HEK293 (cell line): ENCODE measurements at regions of chr6 and their contacts with region 1.

Region 1: GRCh38 chr6:19024737-19025136 is 637.6 kb downstream of the RNF144B start:
- H3K4me3 ChIP-seq: no peak overlapping the region
- H3K27ac ChIP-seq: no peak overlapping the region
- H3K4me1 ChIP-seq: no peaks in the 10 kb centered on the region
- CTCF ChIP-seq: no peak

Region 2: DNA sequence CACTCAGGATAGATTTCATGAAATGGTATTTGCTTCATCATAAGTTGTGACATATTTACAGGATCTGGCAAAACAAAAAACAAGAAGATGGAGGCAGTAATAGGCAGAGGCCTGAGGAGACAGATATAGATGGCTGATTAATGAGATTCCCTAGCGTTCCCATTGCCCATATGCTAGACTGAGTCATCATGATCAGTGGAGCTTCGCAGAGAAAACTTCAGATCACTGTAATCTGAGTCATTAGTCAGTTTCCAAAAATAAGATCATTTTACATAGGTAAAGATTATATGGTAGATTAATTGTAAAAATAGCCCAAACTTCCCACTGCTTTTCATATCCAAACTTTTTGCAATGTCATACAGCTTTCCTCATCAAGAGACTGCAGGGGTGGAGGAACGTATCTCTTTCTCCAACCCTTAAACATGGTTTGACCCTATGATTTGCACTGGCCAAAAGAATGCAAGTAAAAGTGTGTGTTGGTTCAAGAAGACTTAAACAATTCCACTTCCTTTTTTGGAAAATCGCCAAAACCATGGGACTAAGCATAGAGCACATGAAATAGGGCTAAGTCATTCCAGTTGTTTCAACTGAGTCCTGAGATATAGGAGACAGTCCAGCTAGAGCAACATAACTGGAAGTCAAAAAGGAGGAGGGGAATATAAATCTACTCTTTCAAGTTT is 11.6 kb before region 1 on chr6:
- CTCF ChIA-PET with region 1: interaction called, 28 read pairs
- POLR2A ChIA-PET with region 1: no interaction called
- H3K4me3 ChIP-seq: no peak overlapping the region
- H3K27ac ChIP-seq: no peak overlapping the region
- H3K4me1 ChIP-seq: no peaks in the 10 kb centered on the region
- CTCF ChIP-seq: no peak

Region 3: DNA sequence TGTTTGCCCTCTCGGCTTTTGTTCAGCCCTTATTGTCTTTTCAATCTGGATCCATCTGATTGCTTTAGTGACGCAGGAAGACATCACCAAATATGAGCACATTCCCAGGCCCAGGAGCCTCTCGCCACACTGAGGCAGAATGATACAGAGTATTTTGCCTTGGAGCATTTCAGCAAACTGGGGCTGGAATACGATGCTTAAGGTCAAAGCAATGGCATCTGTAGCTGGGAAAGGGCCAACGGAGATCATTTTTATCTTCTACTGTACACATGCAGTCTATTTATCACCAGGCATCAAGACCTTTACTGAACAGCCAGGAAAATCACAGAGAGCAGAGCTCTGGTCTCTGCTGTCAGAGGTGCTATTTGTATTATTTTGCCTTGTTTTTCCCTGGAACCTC is 17.7 kb after region 1 on chr6:
- CTCF ChIA-PET with region 1: interaction called, 11 read pairs
- POLR2A ChIA-PET with region 1: no interaction called
- H3K4me3 ChIP-seq: no peak overlapping the region
- H3K27ac ChIP-seq: no peak overlapping the region
- H3K4me1 ChIP-seq: no peaks in the 10 kb centered on the region
- CTCF ChIP-seq: no peak

Region 4: DNA sequence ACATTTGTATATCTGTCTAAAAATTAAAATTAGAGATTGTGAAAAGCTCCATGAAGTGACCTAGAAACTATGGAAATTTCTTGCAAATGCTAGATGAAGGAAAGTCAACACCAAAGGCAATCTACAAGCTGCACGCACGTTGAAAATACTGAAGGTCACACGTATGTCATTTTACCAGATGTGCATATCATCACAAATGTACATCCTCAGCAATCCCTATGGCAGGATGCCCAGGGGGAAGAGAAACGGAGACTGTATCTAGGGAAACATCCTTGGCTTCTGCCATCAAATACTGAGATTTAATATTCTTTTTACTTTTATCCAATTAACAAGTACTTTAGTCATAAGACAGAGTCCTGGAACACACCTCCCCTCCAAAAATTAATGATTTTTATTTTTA is 34.4 kb after region 1 on chr6:
- CTCF ChIA-PET with region 1: no interaction called
- POLR2A ChIA-PET with region 1: no interaction called
- H3K4me3 ChIP-seq: no peak overlapping the region
- H3K27ac ChIP-seq: no peak overlapping the region
- H3K4me1 ChIP-seq: no peaks in the 10 kb centered on the region
- CTCF ChIP-seq: no peak

Region 5: DNA sequence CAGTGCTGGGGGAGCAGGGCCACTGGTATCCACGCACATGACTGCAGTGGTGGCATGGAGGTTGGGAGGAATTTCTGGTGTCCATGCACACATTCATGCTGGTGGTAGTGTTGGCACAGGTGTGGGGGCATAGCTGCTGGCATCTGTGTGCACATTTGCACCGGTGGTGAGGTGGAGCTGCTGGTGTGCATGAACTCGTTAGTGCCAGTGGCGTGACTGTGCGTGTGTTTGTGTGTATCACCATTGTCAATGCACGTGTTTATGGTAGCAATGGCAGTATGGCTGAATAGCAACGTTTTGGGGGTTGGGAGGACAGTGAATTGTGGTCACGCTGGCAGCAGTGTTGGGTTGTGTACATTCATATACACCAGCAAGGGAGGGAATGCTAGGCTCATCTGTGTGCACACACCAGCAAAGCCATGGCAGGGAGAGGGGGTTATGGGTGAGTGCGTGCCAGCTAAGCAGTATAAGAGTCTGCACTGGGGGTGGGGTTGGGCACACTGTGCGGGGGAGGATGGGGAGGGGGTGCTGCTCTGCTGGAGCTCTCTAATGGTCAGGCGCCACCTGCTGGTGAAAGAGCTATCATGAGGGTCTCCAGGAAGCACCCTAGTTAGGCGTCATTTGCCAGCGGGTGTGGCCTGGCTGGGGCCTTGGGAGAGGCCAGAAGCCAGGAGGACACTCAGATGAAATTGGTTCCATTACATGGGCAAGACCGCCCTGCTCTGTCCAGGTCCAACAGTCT is 186.3 kb after region 1 on chr6:
- CTCF ChIA-PET with region 1: interaction called, 11 read pairs
- POLR2A ChIA-PET with region 1: no interaction called
- H3K4me3 ChIP-seq: no peak overlapping the region
- H3K27ac ChIP-seq: no peak overlapping the region
- H3K4me1 ChIP-seq: no peaks in the 10 kb centered on the region
- CTCF ChIP-seq: no peak

Region 6: DNA sequence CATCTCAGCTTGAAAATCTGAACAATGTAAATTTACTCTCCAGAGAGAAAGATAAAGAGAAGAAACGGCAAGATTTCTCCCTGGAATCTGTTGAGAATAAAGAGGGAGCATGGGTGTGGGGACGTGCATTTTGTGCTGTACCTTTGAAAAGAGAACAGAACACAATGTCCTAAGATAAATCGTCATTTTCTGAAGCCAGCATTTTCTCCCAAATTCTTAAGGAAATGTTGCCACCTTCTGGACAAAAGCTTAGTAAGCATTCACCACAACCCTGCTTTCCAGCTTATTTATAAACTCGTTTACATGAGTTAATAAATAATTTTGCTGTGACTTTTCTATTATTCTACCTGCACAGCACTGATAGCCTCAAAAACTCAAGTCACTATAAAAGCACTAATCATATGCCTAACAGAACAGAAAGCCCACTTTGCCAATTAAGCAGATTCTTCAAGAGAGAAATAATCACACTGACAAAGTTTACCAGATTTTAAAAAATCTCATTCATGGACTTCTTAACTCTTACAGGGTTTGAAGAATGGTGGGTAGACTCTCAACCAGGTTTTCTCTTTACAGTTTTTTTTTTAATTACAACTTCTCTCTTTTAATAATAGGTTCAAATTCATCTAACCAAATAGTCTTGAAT is 1031.7 kb after region 1 on chr6:
- CTCF ChIA-PET with region 1: interaction called, 22 read pairs
- POLR2A ChIA-PET with region 1: no interaction called
- H3K4me3 ChIP-seq: no peak overlapping the region
- H3K27ac ChIP-seq: no peak overlapping the region
- H3K4me1 ChIP-seq: no peaks in the 10 kb centered on the region
- CTCF ChIP-seq: peak; percentile 34; the same call in 1 of the 2 replicates

Region 7: DNA sequence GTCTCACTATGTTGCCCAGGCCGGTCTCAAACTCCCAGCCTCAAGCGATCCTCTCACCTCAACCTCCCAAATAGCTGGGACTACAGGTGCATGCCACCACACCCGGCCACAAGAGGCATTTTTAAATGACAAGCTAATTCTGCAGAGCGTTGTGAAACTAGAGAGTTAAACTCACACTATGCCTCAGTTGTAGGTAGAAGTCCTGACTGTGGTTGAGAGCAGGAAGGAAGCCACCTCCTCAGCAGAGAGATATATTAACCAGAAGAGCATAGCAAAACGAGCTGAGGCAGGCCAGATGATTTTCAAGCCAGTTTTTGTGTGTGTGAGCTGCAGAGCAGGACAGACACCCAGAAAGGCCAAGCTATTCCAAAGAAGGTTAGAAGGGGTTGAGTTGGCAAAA is 1037.2 kb after region 1 on chr6:
- CTCF ChIA-PET with region 1: interaction called, 22 read pairs
- POLR2A ChIA-PET with region 1: no interaction called
- H3K4me3 ChIP-seq: no peak overlapping the region
- H3K27ac ChIP-seq: no peak overlapping the region
- H3K4me1 ChIP-seq: no peaks in the 10 kb centered on the region
- CTCF ChIP-seq: no peak